ENCODE measurements at regions of chr22 and their contacts with region 1.

Region 1: DNA sequence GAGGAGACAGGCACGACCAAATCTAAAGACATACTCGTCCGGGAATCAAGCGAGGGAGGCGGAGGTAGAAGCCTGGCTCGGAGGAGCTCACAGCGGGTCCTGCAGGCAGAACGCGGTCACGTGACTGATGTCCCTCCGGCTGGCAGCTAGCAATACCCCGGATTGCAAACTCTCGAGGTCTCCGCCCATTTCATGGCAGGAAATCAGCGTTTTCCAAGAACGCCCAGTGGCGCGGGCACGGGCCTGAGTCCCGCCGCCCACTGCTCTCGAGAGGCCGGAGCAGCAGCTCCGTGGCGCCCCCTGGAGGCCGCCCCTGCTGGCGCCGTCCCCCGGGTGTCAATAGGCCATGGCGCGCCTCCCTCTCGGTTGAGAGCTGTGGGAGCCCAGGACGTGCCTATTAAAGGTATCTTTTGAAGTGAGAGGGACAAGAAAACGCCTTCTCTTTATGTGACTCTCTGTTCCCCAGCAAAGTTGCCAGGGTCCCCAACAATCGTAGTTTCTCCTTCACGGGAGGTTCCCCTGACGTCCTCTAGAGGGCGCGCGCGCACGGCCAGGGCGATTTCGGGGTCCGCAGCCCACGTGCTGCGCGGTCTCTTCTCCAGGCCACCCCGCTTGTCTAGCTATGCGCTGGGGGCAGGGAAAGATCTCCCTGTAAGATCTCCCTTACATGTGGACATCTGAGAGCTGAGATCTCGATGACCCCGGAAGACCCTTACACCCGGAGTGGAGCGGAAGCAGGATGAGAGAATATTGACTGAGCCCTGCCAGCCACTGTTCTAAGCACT is 37.3 kb upstream of the RBFOX2 start:
- DNase-seq: peak; percentile 94
- ATAC-seq: peak; percentile 92
- H3K4me3 Mint-ChIP-seq: peak overlapping the region; percentile 84
- H3K27ac Mint-ChIP-seq: peak overlapping the region; percentile 87
- H3K4me1 Mint-ChIP-seq: peaks cover 7% of the 10 kb centered on the region; the same call in 1 of the 2 replicates
- H3K27me3 Mint-ChIP-seq: no peaks in the 10 kb centered on the region; the same call in 1 of the 2 replicates
- CTCF ChIP-seq: peak; percentile 100

Region 2: DNA sequence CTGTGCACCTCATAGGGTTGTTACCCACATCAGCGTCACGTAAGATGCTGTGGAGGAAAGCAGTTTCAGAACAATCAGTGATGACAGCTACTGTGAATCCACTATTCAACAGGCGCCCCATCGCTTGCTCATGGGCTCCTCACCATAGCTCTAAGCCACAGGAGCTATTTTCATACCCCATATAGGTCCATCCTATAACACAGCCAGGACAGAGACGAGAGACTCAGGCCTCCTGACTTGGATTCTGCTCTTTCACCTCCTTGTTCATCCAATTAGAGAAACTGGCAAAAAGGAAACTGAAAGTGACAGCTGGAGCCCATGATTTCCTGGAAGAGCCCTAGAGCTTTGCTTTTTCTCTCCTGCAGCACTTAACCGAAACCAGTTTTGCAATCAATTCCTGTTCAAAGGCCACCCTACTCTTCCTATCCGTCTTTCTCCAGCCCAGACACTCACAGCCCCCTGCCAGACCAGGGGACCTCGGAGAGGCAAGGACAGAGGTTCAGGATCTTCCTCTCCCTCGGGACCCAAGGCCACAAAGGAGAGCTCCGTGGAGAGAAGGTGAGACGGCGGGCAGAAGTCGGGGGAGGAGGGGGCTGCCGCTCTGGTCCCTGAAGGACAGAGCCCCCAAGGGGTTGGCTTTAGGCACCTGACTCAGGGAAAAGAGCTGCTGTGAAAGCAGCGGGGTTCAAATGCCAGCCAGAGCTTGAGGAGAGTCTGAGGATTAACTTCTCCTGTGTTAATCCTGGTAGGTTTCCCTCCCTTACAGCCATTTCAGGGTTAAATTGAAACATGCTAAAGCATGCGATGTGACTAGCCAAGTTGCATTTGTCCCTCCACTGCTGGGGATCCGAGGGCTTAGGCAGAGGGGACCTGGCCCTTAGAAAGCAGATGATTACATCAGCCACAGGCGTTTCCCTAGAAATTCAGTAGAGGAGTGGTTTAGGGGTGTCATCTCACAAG is 417.6 kb before region 1 on chr22 and contains the start of gene APOL6:
- CTCF ChIA-PET with region 1: interaction called, 10 read pairs
- POLR2A ChIA-PET with region 1: no interaction called
- DNase-seq: no peak
- ATAC-seq: peak; percentile 61
- H3K4me3 Mint-ChIP-seq: no peak within 1 kb of the TSS
- H3K27ac Mint-ChIP-seq: peak within 1 kb of the TSS; percentile 69; the same call in 1 of the 2 replicates
- H3K4me1 Mint-ChIP-seq: peaks cover 17% of the 10 kb centered on the region
- H3K27me3 Mint-ChIP-seq: peaks cover 5% of the 10 kb centered on the region
- CTCF ChIP-seq: no peak
- total RNA-seq, gene APOL6: 0.17 to 0.27 TPM (median 0.21 TPM) in 3 replicates

Region 3: GRCh38 chr22:35930933-35931332 is 135.0 kb before region 1 on chr22:
- CTCF ChIA-PET with region 1: interaction called, 40 read pairs
- POLR2A ChIA-PET with region 1: no interaction called
- DNase-seq: no peak
- ATAC-seq: peak; percentile 51; the same call in 1 of the 2 replicates
- H3K4me3 Mint-ChIP-seq: no peak overlapping the region
- H3K27ac Mint-ChIP-seq: no peak overlapping the region
- H3K4me1 Mint-ChIP-seq: peaks cover 20% of the 10 kb centered on the region
- H3K27me3 Mint-ChIP-seq: no peaks in the 10 kb centered on the region
- CTCF ChIP-seq: no peak

Region 4: GRCh38 chr22:35995772-35996171 is 70.2 kb before region 1 on chr22:
- CTCF ChIA-PET with region 1: interaction called, 20 read pairs
- POLR2A ChIA-PET with region 1: no interaction called
- DNase-seq: no peak
- ATAC-seq: no peak
- H3K4me3 Mint-ChIP-seq: no peak overlapping the region
- H3K27ac Mint-ChIP-seq: peak overlapping the region; percentile 74
- H3K4me1 Mint-ChIP-seq: peaks cover 39% of the 10 kb centered on the region
- H3K27me3 Mint-ChIP-seq: no peaks in the 10 kb centered on the region
- CTCF ChIP-seq: no peak

Region 5: DNA sequence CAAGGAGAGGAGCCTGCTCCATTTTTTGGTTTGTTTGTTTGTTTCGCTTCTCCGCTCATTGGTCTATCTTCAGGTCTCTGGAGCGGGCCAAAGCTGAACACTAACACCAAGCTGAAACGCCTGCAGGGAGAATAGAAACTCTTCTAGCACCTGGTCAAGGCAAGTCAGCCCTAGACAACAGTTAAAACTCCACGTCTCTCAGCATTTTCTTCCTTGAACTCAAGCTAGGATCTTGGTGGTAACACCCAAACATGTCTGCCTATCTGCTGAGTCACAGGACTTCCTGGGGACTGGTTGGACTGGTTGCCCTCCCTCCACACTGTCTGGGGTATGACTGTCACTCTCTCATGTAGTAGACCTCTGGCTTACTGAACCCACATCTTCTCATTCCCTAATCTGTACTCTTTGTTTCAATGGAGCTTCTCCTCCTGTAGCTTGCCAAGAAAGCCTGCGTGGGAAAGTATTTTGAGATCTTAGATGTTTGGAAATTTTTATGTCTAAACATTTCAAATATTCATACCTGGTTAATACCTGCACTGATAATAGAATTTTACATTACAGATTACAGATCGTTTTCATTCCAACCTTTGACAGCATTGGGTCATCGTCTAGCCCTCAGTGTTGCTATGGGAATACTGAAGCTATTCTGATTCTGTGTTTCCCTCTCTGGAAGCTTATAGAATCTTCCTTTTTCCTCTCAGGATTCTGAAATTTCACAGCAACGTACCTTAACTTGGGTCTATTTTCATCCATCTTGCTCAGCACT is 13.3 kb before region 1 on chr22:
- CTCF ChIA-PET with region 1: interaction called, 70 read pairs
- POLR2A ChIA-PET with region 1: no interaction called
- DNase-seq: no peak
- ATAC-seq: no peak; the same call in 1 of the 2 replicates
- H3K4me3 Mint-ChIP-seq: no peak overlapping the region
- H3K27ac Mint-ChIP-seq: no peak overlapping the region
- H3K4me1 Mint-ChIP-seq: peaks cover 21% of the 10 kb centered on the region
- H3K27me3 Mint-ChIP-seq: no peaks in the 10 kb centered on the region
- CTCF ChIP-seq: no peak

Region 6: GRCh38 chr22:36110306-36110881 is 44.4 kb after region 1 on chr22:
- CTCF ChIA-PET with region 1: interaction called, 23 read pairs
- POLR2A ChIA-PET with region 1: no interaction called
- DNase-seq: peak; percentile 29
- ATAC-seq: peak; percentile 50
- H3K4me3 Mint-ChIP-seq: no peak overlapping the region
- H3K27ac Mint-ChIP-seq: no peak overlapping the region
- H3K4me1 Mint-ChIP-seq: peaks cover 3% of the 10 kb centered on the region
- H3K27me3 Mint-ChIP-seq: no peaks in the 10 kb centered on the region
- CTCF ChIP-seq: no peak

Measured in WTC11 (cell line).